BJ (cell line): ENCODE measurements at regions of chr12 and their contacts with region 1.

Region 1: DNA sequence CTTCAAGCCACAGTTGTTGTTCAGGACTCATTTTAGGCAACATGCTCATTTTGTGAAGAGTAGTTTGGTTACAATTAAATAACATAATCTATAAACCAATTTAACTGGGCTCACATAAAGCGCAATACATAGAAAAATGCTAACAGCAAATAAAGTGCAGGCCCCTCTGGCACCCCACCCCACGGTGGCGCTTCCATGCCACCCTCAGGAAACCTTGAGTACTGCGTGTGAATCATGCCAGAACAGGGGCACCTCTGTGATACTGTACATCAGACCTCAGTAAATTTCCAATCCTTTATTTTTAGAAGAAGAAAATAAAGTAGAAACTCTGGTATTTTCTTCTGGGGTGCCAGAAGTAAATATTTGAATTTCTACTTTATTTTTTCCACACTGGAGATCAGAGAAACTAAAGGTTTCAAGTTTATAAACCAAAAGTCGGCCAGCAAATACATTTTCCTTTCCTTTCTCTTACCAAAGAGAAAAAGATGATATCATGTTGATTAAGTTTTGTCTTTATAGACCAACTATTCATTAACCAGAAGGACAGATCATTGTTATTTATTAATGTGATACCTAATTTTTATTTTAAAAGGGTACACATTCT is 316.8 kb downstream of the PAWR start:
- DNase-seq: no peak
- H3K4me3 ChIP-seq: no peak overlapping the region
- H3K27me3 ChIP-seq: no peaks in the 10 kb centered on the region
- CTCF ChIP-seq: peak; percentile 85

Region 2: GRCh38 chr12:79223210-79223609 is 150.8 kb before region 1 on chr12:
- CTCF ChIA-PET with region 1: no interaction called
- POLR2A ChIA-PET with region 1: no interaction called
- DNase-seq: no peak
- H3K4me3 ChIP-seq: no peak overlapping the region
- H3K27me3 ChIP-seq: no peaks in the 10 kb centered on the region
- CTCF ChIP-seq: no peak

Region 3: GRCh38 chr12:79309040-79309439 is 65.0 kb before region 1 on chr12:
- CTCF ChIA-PET with region 1: no interaction called
- POLR2A ChIA-PET with region 1: no interaction called
- DNase-seq: no peak
- H3K4me3 ChIP-seq: no peak overlapping the region
- H3K27me3 ChIP-seq: no peaks in the 10 kb centered on the region
- CTCF ChIP-seq: no peak

Region 4: DNA sequence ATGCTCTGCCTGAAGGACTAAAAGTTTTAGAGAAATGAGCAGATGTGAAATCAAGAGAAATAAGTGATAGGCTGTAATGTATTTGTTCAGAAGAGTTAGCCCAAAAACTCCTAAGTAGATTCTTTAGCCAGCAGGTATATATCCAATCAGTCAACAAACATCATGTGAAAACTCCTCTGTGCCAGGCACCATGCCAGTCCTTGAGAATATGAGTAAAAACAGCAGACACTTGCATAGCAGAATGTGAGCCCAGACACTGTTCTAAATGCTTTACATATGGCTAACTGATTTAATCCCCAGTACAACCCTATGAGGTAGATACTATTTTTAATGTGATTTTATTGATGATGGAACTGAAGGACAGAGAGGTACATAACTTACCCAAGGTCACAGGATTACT is 13.1 kb before region 1 on chr12:
- CTCF ChIA-PET with region 1: interaction called, 10 read pairs
- POLR2A ChIA-PET with region 1: no interaction called
- DNase-seq: no peak
- H3K4me3 ChIP-seq: no peak overlapping the region
- H3K27me3 ChIP-seq: no peaks in the 10 kb centered on the region; the same call in 1 of the 2 replicates
- CTCF ChIP-seq: no peak

Region 5: DNA sequence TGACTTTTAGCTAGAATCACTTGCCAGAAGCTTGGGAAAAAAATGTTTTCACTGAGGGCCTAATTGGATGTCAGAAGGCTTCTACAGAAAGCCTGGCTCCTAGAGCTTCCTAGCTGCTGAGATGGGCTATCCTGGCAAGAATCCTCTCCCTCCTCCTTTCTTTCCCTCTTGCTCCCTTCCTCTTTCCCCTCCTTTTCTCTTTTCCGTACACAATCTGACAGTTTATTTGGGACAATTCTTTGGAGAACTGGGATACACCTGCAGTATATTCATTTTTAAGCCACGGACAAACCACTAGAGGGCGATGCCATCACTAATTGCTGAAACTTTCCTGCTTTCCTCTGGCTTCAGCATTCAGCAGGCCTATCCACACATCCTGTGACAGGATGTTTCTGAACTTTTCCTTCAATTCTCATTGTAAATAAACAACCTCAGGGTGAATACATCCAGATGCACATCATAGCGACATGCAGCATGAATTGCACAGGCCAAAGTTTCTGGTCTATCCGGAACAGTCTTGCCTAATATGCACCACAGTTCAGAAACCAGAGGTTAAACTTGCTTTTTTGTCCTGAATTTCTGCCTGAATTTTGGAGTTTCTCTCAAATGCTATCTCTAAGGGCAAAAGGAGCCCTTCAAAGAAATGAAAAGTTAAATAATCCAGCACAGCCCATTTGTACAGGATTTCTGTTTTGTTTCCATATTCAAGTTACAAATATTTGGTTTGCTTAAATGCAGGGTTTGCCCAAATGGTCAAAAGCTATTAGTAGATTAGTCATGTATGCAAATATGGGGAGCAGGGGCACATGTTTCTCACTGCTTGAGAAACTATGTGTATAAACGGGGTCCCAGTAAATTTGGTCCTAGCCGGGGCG is 174.0 kb after region 1 on chr12:
- CTCF ChIA-PET with region 1: no interaction called
- POLR2A ChIA-PET with region 1: no interaction called
- DNase-seq: peak; percentile 37
- H3K4me3 ChIP-seq: no peak overlapping the region
- H3K27me3 ChIP-seq: no peaks in the 10 kb centered on the region
- CTCF ChIP-seq: peak; percentile 71